Activated naive CD4-positive, alpha-beta T cell treated with anti-CD3 and anti-CD28 coated beads for 36 hours (primary cell): ENCODE measurements at regions of chr2 and their contacts with region 1.

Region 1: GRCh38 chr2:32553829-32554432 is 73.9 kb upstream of the TTC27 start:
- DNase-seq: no peak
- H3K4me3 Mint-ChIP-seq: no peak overlapping the region
- H3K27ac Mint-ChIP-seq: no peak overlapping the region
- H3K4me1 Mint-ChIP-seq: no peaks in the 10 kb centered on the region
- H3K27me3 Mint-ChIP-seq: no peaks in the 10 kb centered on the region

Region 2: GRCh38 chr2:32516567-32516966 is 37.4 kb before region 1 on chr2:
- CTCF ChIA-PET with region 1: no interaction called
- intact Hi-C with region 1: no loop called
- DNase-seq: no peak
- H3K4me3 Mint-ChIP-seq: no peak overlapping the region
- H3K27ac Mint-ChIP-seq: no peak overlapping the region
- H3K4me1 Mint-ChIP-seq: no peaks in the 10 kb centered on the region
- H3K27me3 Mint-ChIP-seq: no peaks in the 10 kb centered on the region

Region 3: GRCh38 chr2:32772638-32773447 is 218.9 kb after region 1 on chr2:
- CTCF ChIA-PET with region 1: no interaction called
- intact Hi-C with region 1: loop called (anchors 5 kb)
- DNase-seq: no peak
- H3K4me3 Mint-ChIP-seq: no peak overlapping the region
- H3K27ac Mint-ChIP-seq: no peak overlapping the region
- H3K4me1 Mint-ChIP-seq: peaks cover 4% of the 10 kb centered on the region
- H3K27me3 Mint-ChIP-seq: no peaks in the 10 kb centered on the region

Region 4: GRCh38 chr2:33033606-33034081 is 479.7 kb after region 1 on chr2:
- CTCF ChIA-PET with region 1: no interaction called
- intact Hi-C with region 1: loop called (anchors 10 kb)
- DNase-seq: no peak
- H3K4me3 Mint-ChIP-seq: no peak overlapping the region
- H3K27ac Mint-ChIP-seq: no peak overlapping the region
- H3K4me1 Mint-ChIP-seq: no peaks in the 10 kb centered on the region
- H3K27me3 Mint-ChIP-seq: peaks cover 8% of the 10 kb centered on the region